Heart left ventricle (tissue), 16 donors: ENCODE measurements at regions of chr10 and their contacts with region 1.

Region 1: GRCh38 chr10:49115015-49115795 is at the start of gene VSTM4:
- DNase-seq: peak; percentile 50 to 74 (median 55)
- ATAC-seq: peak; percentile 12 to 66 (median 42)
- H3K4me3 ChIP-seq: peak within 1 kb of the TSS; percentile 37 to 94 (median 71)
- H3K27ac ChIP-seq: peak within 1 kb of the TSS; percentile 27 to 92 (median 83)
- H3K4me1 ChIP-seq: peaks cover 0 to 62% (median 28%) of the 10 kb centered on the region in 12 donors
- H3K27me3 ChIP-seq: peaks cover 0 to 6% (median 0%) of the 10 kb centered on the region in 9 donors
- CTCF ChIP-seq: peak in 5 of 12 donors; percentile 11 to 43 (median 16)
- POLR2A ChIP-seq: peak in 1 of 2 donors; percentile 9
- total RNA-seq, gene VSTM4: 8.6 to 22.1 (median 15.8) TPM

Region 2: DNA sequence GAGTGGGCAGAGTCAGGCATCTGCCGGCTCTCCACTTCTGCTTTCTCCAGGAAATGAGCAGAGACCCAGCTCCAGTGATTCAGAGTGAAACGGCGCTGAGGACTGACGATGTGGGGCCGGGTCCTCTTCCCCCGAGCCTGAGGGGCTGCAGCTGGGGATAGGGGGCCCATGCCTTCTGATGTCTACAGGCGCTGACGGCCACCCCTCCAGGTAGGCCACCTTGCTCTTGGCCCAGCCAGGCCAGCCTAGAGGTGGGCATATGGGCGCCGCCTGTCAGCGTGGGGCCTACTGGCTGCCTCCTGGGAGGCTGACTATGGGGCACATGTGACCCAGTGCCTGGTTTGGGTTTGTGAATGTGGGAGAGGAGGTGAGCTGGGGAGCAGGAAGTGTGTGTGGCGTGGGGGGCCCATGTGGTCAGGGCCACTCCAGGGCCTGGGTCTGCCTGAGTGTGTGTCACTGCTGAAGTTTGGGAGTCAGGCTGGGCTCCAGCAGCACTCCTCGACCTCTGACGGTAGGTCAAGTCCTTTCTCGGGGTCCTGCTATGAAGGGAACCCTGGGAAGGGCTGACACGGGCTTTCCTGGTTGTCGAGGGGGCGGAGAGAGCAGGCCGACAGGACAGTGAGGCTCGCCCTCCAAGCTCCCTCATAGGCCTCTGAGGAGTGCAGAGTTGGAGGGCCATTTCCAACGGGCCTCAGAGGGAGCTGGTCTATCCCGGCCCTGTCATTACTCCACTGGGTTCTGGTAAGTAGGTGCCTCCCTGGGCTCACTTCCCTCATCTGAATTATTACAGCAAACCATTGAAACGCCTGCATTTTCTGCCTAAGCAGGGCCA is 430.2 kb before region 1 on chr10 and contains the start of gene WDFY4:
- intact Hi-C with region 1: no loop called
- DNase-seq: peak in 2 of 5 donors; percentile 55 to 74
- ATAC-seq: peak in 3 of 4 donors; percentile 66 to 78 (median 67)
- H3K4me3 ChIP-seq: peak within 1 kb of the TSS in 8 of 12 donors; percentile 8 to 58 (median 30)
- H3K27ac ChIP-seq: peak within 1 kb of the TSS in 4 of 12 donors; percentile 11 to 87 (median 26)
- H3K4me1 ChIP-seq: peaks cover 0 to 9% (median 0%) of the 10 kb centered on the region in 12 donors
- H3K27me3 ChIP-seq: no peaks in the 10 kb centered on the region
- CTCF ChIP-seq: no peak
- POLR2A ChIP-seq: no peak
- total RNA-seq, gene WDFY4: 0.56 to 19.8 (median 1.1) TPM

Region 3: GRCh38 chr10:49001402-49001801 is 113.8 kb before region 1 on chr10:
- intact Hi-C with region 1: loop called in 3 of 10 experiments (anchors 5 to 10 kb)
- DNase-seq: peak in 1 of 5 donors; percentile 45
- ATAC-seq: peak; percentile 52 to 84 (median 72)
- H3K4me3 ChIP-seq: no peak overlapping the region
- H3K27ac ChIP-seq: peak overlapping the region in 9 of 12 donors; percentile 19 to 78 (median 64)
- H3K4me1 ChIP-seq: peaks cover 0 to 19% (median 11%) of the 10 kb centered on the region in 12 donors
- H3K27me3 ChIP-seq: no peaks in the 10 kb centered on the region
- CTCF ChIP-seq: peak in 6 of 12 donors; percentile 11 to 46 (median 25)
- POLR2A ChIP-seq: no peak

Region 4: DNA sequence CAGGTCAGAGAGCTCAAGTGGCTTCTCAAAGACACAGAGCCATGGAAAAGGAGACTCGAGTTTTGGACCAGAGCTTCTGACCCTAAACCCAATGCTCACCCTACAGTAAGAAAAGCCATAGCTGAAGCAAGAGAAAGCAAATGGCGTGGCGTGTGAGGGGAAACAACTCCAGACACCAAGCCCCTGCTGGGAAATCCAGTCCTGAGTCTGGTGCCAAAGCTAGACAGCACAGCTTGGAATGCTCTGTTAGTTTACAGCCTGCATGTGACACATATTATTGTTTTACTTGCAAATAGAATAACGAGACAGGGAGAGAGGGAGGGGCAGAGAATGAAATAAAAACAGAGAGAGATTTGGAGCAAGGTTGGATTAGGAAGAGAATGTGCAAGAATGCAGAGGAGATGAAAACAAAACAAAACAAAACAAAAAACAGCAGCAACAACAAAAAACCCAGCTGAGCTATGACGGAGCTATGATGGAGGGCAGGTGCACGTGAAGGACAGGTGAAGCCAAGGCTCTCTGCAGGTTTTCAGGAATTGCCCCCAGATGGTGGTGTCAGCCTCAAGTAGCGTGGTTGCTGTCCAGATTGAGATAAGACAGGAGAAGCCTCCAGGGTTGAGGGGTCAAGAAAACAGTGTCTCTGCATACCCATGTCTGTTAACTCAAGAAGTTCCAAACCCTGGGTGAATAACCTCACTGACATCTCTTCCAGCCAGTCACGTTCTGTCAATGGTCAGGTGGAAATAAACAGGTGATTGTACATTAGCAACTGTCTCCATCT is 105.8 kb before region 1 on chr10:
- intact Hi-C with region 1: loop called in 3 of 10 experiments (anchors 5 to 10 kb)
- DNase-seq: no peak
- ATAC-seq: peak; percentile 7 to 60 (median 26)
- H3K4me3 ChIP-seq: no peak overlapping the region
- H3K27ac ChIP-seq: peak overlapping the region; percentile 28 to 90 (median 74)
- H3K4me1 ChIP-seq: peaks cover 0 to 60% (median 34%) of the 10 kb centered on the region in 12 donors
- H3K27me3 ChIP-seq: no peaks in the 10 kb centered on the region
- CTCF ChIP-seq: no peak
- POLR2A ChIP-seq: no peak

Region 5: DNA sequence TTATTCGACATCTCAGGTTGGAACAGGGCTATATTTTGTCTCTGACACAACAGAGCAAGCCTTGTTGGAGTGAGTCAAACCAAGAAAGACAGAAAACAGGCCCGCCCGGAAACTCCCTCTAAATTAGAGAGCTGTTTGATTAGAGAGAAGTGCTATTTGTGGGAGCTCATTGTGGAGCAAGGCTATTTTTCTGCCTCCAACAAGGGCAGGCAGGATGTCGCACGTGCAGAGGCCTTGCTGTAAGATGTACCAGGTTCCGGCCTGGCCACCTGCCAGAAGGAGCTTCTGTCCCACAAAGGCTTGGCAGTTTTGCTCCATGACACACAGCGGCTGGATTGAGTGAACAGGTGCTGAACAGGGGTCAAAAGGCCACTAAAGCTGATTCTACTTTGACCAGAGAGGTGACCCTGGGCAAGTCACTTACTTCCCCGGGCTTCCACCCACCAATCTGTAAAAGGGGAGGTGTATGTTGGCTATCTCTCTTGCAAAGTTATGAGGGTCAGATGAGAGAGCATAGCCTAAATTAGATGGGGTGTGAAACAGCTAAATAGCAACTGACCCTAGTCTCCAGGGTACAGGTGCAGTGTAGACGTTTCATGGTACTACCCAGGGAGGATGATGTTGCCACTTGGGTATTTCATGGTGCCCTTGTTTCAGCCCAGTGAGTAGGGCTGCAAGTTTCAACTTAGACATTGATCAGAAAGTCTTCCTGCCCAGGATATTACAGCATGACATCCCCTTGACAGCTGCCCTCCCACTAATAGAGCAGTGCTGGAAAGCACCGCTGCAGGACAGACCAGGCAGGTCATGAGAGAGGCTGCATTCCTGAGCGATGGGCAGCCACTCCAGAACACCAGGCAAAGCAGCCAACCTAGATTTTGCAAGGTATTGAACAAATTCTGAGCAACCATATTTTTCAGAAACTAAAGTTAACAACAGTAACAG is 61.9 kb before region 1 on chr10:
- intact Hi-C with region 1: loop called in 4 of 10 experiments (anchors 5 to 10 kb)
- DNase-seq: peak in 4 of 5 donors; percentile 36 to 69 (median 50)
- ATAC-seq: peak; percentile 12 to 80 (median 70)
- H3K4me3 ChIP-seq: no peak overlapping the region
- H3K27ac ChIP-seq: peak overlapping the region in 10 of 12 donors; percentile 2 to 76 (median 44)
- H3K4me1 ChIP-seq: peaks cover 0 to 59% (median 30%) of the 10 kb centered on the region in 12 donors
- H3K27me3 ChIP-seq: no peaks in the 10 kb centered on the region
- CTCF ChIP-seq: no peak
- POLR2A ChIP-seq: no peak

Region 6: GRCh38 chr10:49080071-49080470 is 35.1 kb before region 1 on chr10:
- intact Hi-C with region 1: loop called in 1 of 10 experiments (anchors 5 kb)
- DNase-seq: peak in 1 of 5 donors; percentile 39
- ATAC-seq: peak; percentile 33 to 57 (median 41)
- H3K4me3 ChIP-seq: no peak overlapping the region
- H3K27ac ChIP-seq: peak overlapping the region in 6 of 12 donors; percentile 1 to 48 (median 25)
- H3K4me1 ChIP-seq: peaks cover 0 to 76% (median 58%) of the 10 kb centered on the region in 12 donors
- H3K27me3 ChIP-seq: no peaks in the 10 kb centered on the region
- CTCF ChIP-seq: no peak
- POLR2A ChIP-seq: no peak

Region 7: DNA sequence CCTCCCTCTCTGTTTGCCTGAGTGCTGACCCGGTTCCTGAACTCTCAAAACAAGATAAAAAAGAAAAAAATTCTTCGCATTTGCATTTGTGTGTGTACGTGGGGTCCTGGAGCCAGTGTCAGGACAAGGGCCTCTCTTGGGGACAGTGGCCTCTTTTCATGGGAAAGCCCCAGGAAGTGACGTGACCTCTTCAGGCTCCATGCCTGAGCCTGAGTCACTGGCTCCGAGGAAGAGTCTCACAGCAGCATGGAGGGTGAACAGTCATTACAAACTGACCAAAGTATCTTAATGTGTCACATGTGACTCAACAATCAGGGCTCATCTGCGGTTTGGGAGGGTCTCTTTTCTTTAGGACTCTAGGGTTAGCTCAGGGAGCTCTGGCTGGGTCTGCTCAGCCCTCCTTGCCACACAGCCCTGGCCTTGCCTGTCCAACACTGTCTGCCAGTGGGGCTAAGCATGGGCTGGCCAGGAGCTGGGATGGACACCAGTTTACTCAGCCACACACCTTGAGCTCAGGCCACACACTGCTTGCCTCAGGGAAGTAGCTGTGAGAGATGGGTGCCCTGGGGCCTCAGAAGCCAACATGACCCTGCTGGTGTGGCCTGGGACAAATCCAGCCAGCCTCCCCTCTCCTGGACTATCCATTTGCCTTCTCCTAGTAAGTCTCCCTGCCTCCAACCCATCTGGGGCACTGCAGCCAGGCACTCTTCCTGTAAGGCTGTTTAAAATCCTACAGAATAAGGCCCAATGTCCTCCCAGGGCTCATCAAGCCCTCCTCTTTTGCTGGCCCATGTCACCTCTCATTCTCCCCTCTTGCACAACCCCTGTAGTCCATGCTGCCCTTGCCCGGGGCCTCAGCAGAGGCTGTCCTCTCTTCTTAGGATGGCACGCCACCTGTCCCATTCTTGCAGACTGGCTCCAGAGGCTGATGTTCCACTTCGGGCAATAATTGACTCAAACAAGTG is 62.5 kb after region 1 on chr10:
- intact Hi-C with region 1: loop called in 1 of 10 experiments (anchors 10 kb)
- DNase-seq: peak; percentile 73 to 86 (median 84)
- ATAC-seq: peak; percentile 89 to 97 (median 92)
- H3K4me3 ChIP-seq: no peak overlapping the region
- H3K27ac ChIP-seq: peak overlapping the region; percentile 53 to 90 (median 81)
- H3K4me1 ChIP-seq: peaks cover 0 to 94% (median 33%) of the 10 kb centered on the region in 12 donors
- H3K27me3 ChIP-seq: no peaks in the 10 kb centered on the region
- CTCF ChIP-seq: no peak
- POLR2A ChIP-seq: no peak